CD4-positive, alpha-beta memory T cell (primary cell): ENCODE measurements at regions of chr10 and their contacts with region 1.

Region 1: DNA sequence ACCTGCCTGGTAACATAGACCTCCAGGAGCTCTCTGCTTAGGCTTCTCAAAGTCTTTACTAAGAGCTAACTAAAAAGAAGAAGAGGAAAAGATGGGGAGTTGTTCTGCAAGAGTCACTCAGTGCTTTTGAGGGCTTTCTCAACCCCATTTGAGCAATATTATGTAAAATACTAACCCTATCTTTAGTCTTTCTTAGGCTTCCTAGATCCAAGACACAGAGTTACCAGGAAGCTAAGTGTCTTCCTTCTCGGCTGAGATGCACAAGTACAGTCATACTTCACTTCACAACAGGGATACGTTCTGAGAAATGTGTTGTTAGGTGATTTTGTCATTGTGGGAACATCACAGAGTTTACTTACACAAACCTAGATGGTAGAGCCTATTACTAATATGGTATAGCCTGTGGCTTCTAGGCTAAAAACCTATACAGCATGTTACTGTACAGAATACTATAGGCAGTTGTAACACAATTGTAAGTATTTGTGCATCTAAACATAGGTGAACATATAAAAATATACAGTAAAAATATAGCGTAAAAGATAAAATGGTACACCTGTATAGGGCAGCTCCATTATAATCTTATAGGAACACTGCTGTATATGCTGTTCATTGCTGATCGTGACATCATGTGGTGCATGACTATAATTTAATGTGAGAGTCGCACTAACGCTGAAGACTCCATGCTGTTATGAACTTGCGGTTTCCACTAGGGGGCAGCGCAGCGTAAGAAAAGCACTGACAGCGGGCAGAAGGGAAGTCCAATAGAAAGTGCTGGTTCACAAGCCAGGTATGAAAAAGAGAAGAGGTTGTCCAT is 16.3 kb downstream of the ANKRD22 start:
- DNase-seq: peak; percentile 80 to 86 (median 82)
- H3K4me3 ChIP-seq: no peak overlapping the region
- H3K4me3 Mint-ChIP-seq: no peak overlapping the region
- H3K27ac ChIP-seq: no peak overlapping the region
- H3K27ac Mint-ChIP-seq: peak overlapping the region in 1 of 7 donors; percentile 29
- H3K4me1 ChIP-seq: peaks cover 46% of the 10 kb centered on the region
- H3K4me1 Mint-ChIP-seq: peaks cover 26 to 34% (median 30%) of the 10 kb centered on the region in 4 donors
- H3K27me3 ChIP-seq: no peaks in the 10 kb centered on the region
- H3K27me3 Mint-ChIP-seq: no peaks in the 10 kb centered on the region

Region 2: DNA sequence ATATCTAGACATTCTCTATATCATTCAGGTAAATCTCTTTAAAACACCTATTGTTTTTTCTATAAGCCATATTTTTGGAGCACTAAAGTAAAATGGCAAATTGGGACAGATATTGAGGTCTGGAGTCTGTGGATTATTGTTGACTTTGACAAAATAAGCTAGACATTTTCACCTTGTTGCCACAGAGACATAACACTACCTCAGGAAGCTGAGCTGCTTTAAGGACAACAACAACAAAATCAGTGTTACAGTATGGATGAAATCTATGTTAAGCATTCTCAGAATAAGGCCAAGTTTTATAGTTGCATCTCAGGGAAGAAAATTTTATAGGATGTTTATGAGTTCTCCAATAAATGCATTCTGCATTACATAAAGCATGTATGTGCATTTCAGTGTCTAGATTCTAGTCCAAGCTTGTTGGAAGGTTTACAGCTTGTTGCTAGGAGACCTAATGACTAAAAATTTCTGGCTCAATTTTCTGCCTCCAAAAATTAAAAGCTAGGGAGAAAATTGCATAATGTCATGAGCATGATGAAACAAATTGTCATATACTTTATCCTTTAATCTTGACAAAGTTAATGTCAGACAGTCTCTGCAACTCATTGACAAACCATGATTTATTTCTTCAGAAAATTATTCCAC is 14.4 kb before region 1 on chr10:
- CTCF ChIA-PET with region 1: interaction called, 110 read pairs
- POLR2A ChIA-PET with region 1: interaction called, 31 read pairs
- intact Hi-C with region 1: no loop called
- DNase-seq: peak in 1 of 5 donors; percentile 28
- H3K4me3 ChIP-seq: no peak overlapping the region
- H3K4me3 Mint-ChIP-seq: peak overlapping the region in 2 of 8 donors; percentile 16 to 33
- H3K27ac ChIP-seq: no peak overlapping the region
- H3K27ac Mint-ChIP-seq: peak overlapping the region in 3 of 7 donors; percentile 6 to 61 (median 31)
- H3K4me1 ChIP-seq: peaks cover 35% of the 10 kb centered on the region
- H3K4me1 Mint-ChIP-seq: peaks cover 27 to 62% (median 47%) of the 10 kb centered on the region in 4 donors
- H3K27me3 ChIP-seq: no peaks in the 10 kb centered on the region
- H3K27me3 Mint-ChIP-seq: no peaks in the 10 kb centered on the region

Region 3: DNA sequence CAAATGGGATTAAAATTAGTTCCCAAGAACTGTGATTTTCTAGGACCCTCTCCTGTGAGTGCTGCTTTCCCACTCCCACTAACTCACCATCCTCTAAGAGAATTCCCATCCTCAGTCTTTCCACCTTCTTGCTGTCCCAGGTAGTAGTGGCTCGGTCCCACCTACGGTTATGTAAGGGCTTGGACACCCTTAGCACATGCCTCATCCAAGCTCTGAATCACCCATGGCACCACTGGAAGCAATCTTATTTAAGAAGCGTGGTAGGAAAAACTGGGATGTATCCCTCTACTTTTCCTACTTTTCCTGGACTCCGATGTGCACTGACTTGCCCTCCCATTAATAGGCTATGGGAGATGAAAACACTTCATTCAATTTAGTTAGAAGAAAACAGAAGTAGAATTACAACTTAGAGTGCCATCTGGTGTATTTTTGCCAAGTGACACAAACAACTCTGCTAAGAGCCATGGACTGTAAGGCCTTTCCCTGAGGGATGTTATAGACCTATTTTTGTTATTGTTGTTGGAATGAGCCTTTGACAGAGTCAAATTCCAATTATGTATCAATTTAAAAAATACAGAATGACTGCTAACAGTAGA is 30.1 kb after region 1 on chr10:
- CTCF ChIA-PET with region 1: interaction called, 12 read pairs
- POLR2A ChIA-PET with region 1: no interaction called
- intact Hi-C with region 1: loop called (anchors 1 kb)
- DNase-seq: no peak
- H3K4me3 ChIP-seq: no peak overlapping the region
- H3K4me3 Mint-ChIP-seq: no peak overlapping the region
- H3K27ac ChIP-seq: no peak overlapping the region
- H3K27ac Mint-ChIP-seq: no peak overlapping the region
- H3K4me1 ChIP-seq: no peaks in the 10 kb centered on the region
- H3K4me1 Mint-ChIP-seq: no peaks in the 10 kb centered on the region
- H3K27me3 ChIP-seq: no peaks in the 10 kb centered on the region
- H3K27me3 Mint-ChIP-seq: peaks cover 2 to 3% of the 10 kb centered on the region in 2 donors

Region 4: GRCh38 chr10:88901206-88901983 is 66.1 kb after region 1 on chr10:
- CTCF ChIA-PET with region 1: interaction called, 15 read pairs
- POLR2A ChIA-PET with region 1: no interaction called
- intact Hi-C with region 1: no loop called
- DNase-seq: no peak
- H3K4me3 ChIP-seq: no peak overlapping the region
- H3K4me3 Mint-ChIP-seq: no peak overlapping the region
- H3K27ac ChIP-seq: no peak overlapping the region
- H3K27ac Mint-ChIP-seq: peak overlapping the region in 2 of 7 donors; percentile 23 to 49
- H3K4me1 ChIP-seq: peaks cover 47% of the 10 kb centered on the region
- H3K4me1 Mint-ChIP-seq: peaks cover 32 to 44% (median 38%) of the 10 kb centered on the region in 4 donors
- H3K27me3 ChIP-seq: no peaks in the 10 kb centered on the region
- H3K27me3 Mint-ChIP-seq: no peaks in the 10 kb centered on the region

Region 5: DNA sequence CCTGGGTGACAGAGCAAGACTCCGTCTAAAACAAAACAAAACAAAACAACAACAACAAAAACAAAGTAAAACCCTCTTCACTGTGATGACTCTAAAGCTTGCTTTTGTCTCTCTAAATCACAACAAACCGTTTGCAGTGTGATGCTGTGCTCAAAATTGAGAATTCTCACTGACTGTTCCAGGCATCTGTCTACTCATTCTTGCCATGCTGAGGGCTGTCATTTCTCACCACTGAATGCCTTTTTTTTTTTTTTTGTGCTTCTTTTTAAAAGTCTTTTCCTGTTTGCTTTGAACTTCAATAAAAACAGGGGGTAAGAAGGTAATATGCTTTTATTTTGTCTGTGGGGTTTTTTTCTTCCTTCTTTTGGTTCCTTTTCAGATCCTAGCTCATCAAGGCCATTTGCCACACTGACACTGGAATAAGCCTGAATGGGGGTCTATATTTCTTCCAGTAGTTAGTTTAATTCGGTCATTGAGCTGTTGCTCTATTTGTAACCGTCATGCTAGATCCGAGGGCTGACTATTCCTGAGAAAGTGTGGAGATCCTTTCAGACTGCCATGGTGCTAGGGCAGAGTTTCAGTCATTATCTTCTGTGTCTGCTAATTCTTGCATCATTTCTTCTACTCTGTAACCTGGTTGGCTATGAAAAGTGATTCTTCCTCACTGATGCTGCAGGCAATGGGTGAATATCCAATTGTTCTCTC is 165.9 kb after region 1 on chr10:
- CTCF ChIA-PET with region 1: no interaction called
- POLR2A ChIA-PET with region 1: no interaction called
- intact Hi-C with region 1: no loop called
- DNase-seq: peak; percentile 45 to 70 (median 50)
- H3K4me3 ChIP-seq: peak overlapping the region in 1 of 2 donors; percentile 25
- H3K4me3 Mint-ChIP-seq: peak overlapping the region; percentile 69 to 89 (median 85)
- H3K27ac ChIP-seq: peak overlapping the region; percentile 74
- H3K27ac Mint-ChIP-seq: peak overlapping the region; percentile 81 to 98 (median 89)
- H3K4me1 ChIP-seq: peaks cover 85% of the 10 kb centered on the region
- H3K4me1 Mint-ChIP-seq: peaks cover 51 to 87% (median 67%) of the 10 kb centered on the region in 4 donors
- H3K27me3 ChIP-seq: no peaks in the 10 kb centered on the region
- H3K27me3 Mint-ChIP-seq: no peaks in the 10 kb centered on the region

Region 6: DNA sequence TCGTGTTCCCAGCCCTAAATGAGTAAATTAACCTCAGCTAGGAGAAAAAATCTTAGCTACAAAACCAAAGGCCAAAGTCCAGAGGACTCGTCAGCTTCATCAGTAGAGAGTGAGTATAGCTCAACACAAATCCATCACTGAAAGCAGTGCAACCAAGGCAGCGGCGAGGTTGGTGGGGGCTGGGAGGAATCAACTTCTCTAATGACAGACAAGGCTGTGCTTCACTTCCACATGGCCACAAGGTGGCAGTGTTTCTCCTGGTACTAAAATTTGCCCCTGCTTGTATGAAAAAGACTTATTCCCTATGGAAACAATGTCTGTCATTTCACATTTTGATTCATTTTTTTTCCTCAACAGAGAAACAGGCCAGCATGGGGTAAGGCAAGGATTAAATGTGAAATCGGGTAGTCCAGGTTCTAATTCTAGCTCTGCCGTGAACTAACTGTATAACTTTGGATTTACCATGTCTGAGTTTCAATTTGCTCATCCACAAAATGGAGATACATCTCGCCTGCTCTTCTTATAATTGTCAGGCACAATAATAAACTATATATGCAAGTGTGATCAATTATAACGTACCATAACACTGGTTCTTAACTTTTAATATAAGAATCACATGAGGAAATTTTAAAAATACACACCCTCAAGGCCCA is 194.6 kb after region 1 on chr10:
- CTCF ChIA-PET with region 1: interaction called, 12 read pairs
- POLR2A ChIA-PET with region 1: no interaction called
- intact Hi-C with region 1: no loop called
- DNase-seq: peak; percentile 48 to 63 (median 59)
- H3K4me3 ChIP-seq: no peak overlapping the region
- H3K4me3 Mint-ChIP-seq: peak overlapping the region in 1 of 8 donors; percentile 17
- H3K27ac ChIP-seq: no peak overlapping the region
- H3K27ac Mint-ChIP-seq: peak overlapping the region in 2 of 7 donors; percentile 5 to 42
- H3K4me1 ChIP-seq: peaks cover 4% of the 10 kb centered on the region
- H3K4me1 Mint-ChIP-seq: peaks cover 7 to 14% (median 9%) of the 10 kb centered on the region in 4 donors
- H3K27me3 ChIP-seq: no peaks in the 10 kb centered on the region
- H3K27me3 Mint-ChIP-seq: no peaks in the 10 kb centered on the region

Region 7: DNA sequence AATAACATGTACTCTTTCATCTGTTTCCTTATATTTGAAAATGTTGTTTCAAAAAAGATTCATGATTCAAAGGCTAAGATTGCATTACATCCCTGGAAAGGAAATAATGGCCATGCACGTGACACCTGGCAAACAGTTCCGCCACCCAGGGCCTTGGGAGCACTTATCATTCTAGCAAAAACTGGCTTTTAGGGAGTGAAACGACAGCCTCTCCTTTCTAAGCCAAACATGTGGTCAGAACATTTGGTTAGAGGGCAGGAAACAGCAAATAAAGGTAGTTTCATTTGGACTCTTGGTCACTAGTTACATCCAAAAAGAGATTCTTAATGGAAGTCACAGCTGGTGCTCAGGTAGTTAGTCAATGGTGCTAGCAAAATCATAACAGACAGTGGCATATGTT is 238.8 kb after region 1 on chr10:
- CTCF ChIA-PET with region 1: no interaction called
- POLR2A ChIA-PET with region 1: no interaction called
- intact Hi-C with region 1: no loop called
- DNase-seq: no peak
- H3K4me3 ChIP-seq: no peak overlapping the region
- H3K4me3 Mint-ChIP-seq: no peak overlapping the region
- H3K27ac ChIP-seq: no peak overlapping the region
- H3K27ac Mint-ChIP-seq: no peak overlapping the region
- H3K4me1 ChIP-seq: no peaks in the 10 kb centered on the region
- H3K4me1 Mint-ChIP-seq: peaks cover 0 to 4% (median under 1%) of the 10 kb centered on the region in 4 donors
- H3K27me3 ChIP-seq: no peaks in the 10 kb centered on the region
- H3K27me3 Mint-ChIP-seq: peaks cover 0 to 4% of the 10 kb centered on the region in 2 donors

Region 8: GRCh38 chr10:89829887-89830269 is 994.6 kb after region 1 on chr10:
- CTCF ChIA-PET with region 1: no interaction called
- POLR2A ChIA-PET with region 1: no interaction called
- intact Hi-C with region 1: no loop called
- DNase-seq: no peak
- H3K4me3 ChIP-seq: no peak overlapping the region
- H3K4me3 Mint-ChIP-seq: no peak overlapping the region
- H3K27ac ChIP-seq: no peak overlapping the region
- H3K27ac Mint-ChIP-seq: no peak overlapping the region
- H3K4me1 ChIP-seq: no peaks in the 10 kb centered on the region
- H3K4me1 Mint-ChIP-seq: no peaks in the 10 kb centered on the region
- H3K27me3 ChIP-seq: no peaks in the 10 kb centered on the region
- H3K27me3 Mint-ChIP-seq: peaks cover 0 to 2% of the 10 kb centered on the region in 2 donors